Breast epithelium (tissue), 4 donors: ENCODE measurements at regions of chr14 and their contacts with region 1.

Region 1: GRCh38 chr14:38425324-38425976 is 169.6 kb upstream of the CLEC14A start:
- DNase-seq: no peak
- H3K4me3 ChIP-seq: no peak overlapping the region
- H3K27ac ChIP-seq: no peak overlapping the region
- H3K4me1 ChIP-seq: no peaks in the 10 kb centered on the region
- H3K27me3 ChIP-seq: no peaks in the 10 kb centered on the region
- CTCF ChIP-seq: no peak
- POLR2A ChIP-seq: no peak

Region 2: DNA sequence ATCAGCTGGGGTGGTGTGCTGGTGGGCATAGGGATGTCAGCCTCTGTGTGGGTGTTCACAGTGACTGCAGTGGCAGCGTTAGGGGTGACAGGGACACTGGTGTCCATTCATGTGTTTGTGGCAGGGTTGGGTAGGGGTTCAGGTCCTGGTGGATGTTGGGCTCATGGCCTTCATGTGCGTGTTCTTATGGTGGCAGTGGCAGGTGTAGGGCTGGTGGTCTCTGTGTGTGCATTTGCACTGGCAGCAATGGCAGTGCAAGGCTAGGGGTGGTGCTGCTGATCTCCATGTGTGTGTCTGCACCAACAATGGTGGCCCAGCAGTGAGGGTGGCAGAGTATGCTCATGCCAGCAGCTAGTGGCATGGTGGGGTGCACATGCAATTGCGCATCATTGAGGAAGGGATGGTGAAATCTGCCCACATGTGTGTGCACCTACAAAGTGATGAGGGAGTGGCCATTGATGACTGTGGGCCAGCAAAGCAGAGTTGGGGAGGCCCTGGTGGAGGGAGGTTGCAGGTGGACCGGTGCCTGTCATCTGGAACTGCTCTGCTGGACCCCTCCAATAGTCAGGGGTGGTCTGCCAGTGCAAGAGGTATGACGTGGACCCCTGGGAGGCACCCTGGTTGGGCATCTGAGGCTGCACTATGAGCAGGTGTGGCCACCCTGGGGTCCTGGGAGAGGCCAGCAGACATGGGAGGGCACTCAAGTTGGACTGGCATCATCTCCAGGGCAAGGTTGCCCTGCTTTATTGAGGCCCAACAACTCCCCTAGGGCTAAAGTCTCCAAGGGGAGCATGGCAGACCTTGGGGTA is 647.1 kb before region 1 on chr14:
- intact Hi-C with region 1: no loop called
- DNase-seq: no peak
- H3K4me3 ChIP-seq: no peak overlapping the region
- H3K27ac ChIP-seq: no peak overlapping the region
- H3K4me1 ChIP-seq: no peaks in the 10 kb centered on the region
- H3K27me3 ChIP-seq: no peaks in the 10 kb centered on the region
- CTCF ChIP-seq: no peak
- POLR2A ChIP-seq: no peak

Region 3: GRCh38 chr14:37916302-37916701 is 509.1 kb before region 1 on chr14:
- intact Hi-C with region 1: loop called (anchors 5 kb)
- DNase-seq: no peak
- H3K4me3 ChIP-seq: no peak overlapping the region
- H3K27ac ChIP-seq: no peak overlapping the region
- H3K4me1 ChIP-seq: no peaks in the 10 kb centered on the region
- H3K27me3 ChIP-seq: no peaks in the 10 kb centered on the region
- CTCF ChIP-seq: no peak
- POLR2A ChIP-seq: no peak